Posterior vena cava (tissue), 2 donors: ENCODE measurements at regions of chr12 and their contacts with region 1.

Region 1: DNA sequence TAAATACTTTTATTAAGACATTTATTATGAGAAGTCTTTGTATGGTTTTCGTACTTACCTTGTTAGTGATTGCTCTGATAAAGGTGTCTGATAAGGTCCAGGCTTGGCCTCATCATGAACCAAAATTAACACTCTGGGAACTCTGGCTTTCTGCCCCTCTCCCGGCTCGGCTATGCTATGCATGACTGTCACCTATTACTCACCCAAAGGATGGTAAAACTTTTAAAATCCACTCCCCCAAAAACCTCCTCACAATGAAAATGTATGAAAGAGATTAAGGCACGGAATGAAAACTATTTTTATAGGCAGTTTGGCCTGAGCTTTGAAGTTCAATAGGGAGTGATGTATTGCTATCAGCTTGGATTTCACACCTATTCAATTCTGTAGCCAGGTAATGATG is 217.3 kb upstream of the TBX3 start:
- DNase-seq: no peak

Region 2: DNA sequence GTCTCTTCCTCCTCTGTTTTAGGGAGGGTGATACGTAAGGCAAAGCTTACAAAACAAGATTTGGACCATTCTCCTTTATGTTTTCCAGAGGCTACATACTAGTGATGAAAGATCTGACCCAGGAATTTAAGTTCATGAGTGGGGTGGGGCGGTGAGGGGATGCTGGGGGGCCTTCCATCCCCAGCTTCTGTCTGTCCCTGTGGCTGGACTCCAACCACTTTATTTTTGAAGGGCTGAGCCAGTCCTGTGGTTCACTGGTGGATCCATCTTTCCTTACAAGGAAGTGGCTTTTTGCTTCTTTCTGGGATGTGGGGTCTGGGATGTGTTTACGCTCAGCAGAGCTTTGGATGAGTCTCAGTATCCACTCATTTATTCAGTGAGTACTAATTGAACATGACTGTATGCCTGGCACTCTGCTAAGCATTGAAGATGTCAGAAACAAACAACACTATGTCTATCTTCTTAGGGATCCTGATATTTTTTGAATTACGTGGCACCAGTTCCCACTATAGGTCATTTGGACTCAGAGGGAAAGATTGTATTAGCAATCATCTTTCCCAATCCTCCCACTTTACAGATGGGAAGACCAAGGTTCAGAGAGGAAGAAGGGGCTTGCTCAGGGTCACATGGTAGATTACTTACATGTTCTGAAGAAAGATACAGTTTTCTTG is 74.5 kb after region 1 on chr12:
- intact Hi-C with region 1: loop called in 1 of 2 experiments (anchors 2 kb)
- DNase-seq: no peak